ENCODE measurements at regions of chr4 and their contacts with region 1.

Region 1: GRCh38 chr4:8403173-8403753 is 37.3 kb downstream of the ACOX3 start:
- DNase-seq: peak; percentile 77
- ATAC-seq: peak; percentile 96
- H3K4me3 ChIP-seq: no peak overlapping the region
- H3K27ac ChIP-seq: no peak overlapping the region
- H3K4me1 ChIP-seq: no peaks in the 10 kb centered on the region
- H3K27me3 ChIP-seq: no peaks in the 10 kb centered on the region
- CTCF ChIP-seq: peak; percentile 99
- POLR2A ChIP-seq: peak; percentile 40; the same call in 1 of the 2 replicates
- RAD21 ChIP-seq: peak; percentile 100

Region 2: DNA sequence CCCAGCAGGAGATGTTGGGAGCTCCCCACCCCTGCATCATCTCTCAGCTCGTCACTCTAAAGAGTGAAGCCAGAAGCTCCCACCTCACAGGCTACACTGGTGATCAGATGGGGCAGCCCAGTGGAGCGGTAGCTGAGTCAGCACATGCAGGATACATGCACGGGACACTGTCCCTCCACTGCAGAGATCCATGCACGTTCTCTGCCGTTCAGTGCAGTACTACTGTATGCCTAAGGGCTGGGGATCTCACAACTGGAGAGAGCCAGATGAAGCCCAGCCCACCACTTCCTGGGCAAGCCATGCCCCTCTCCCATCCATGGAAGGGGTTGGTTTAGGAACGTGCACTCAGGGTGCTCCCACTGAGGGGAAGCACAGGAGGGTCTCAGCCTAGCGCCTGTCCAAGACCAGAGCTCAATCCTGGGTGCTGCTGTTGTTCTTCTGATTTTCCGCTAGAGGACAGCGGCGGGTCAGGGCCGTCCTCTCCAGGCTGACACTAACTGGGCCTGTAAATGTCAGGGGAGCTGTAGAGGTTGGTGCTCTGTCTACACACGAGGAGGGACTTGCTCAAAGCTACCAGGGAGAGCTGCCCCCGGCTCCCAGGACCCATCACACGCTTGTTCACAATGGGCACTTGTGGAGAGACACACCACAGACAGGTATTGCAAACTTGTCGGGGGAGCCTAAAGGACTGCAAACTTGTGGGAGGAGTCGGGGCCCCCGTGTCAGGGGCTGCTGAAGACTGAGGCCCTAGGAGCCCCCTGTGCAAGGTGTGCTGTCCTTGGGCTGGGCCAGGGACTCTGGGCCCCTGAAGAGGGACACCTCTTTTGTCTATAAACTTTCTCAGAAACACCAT is 226.5 kb before region 1 on chr4:
- CTCF ChIA-PET with region 1: interaction called, 15 read pairs
- POLR2A ChIA-PET with region 1: no interaction called
- dilution Hi-C with region 1: no loop called
- in situ Hi-C with region 1: loop called (anchors 5 kb)
- intact Hi-C with region 1: loop called (anchors 1 kb)
- DNase-seq: peak; percentile 52
- ATAC-seq: peak; percentile 99
- H3K4me3 ChIP-seq: no peak overlapping the region
- H3K27ac ChIP-seq: no peak overlapping the region
- H3K4me1 ChIP-seq: no peaks in the 10 kb centered on the region
- H3K27me3 ChIP-seq: peaks cover 38% of the 10 kb centered on the region
- CTCF ChIP-seq: peak; percentile 93
- POLR2A ChIP-seq: no peak
- RAD21 ChIP-seq: peak; percentile 94

Region 3: GRCh38 chr4:8241895-8242696 is 161.2 kb before region 1 on chr4:
- CTCF ChIA-PET with region 1: interaction called, 18 read pairs
- POLR2A ChIA-PET with region 1: no interaction called
- dilution Hi-C with region 1: no loop called
- in situ Hi-C with region 1: loop called (anchors 5 kb)
- intact Hi-C with region 1: loop called (anchors 1 kb)
- DNase-seq: peak; percentile 91
- ATAC-seq: peak; percentile 99
- H3K4me3 ChIP-seq: no peak overlapping the region
- H3K27ac ChIP-seq: no peak overlapping the region
- H3K4me1 ChIP-seq: peaks cover 5% of the 10 kb centered on the region
- H3K27me3 ChIP-seq: no peaks in the 10 kb centered on the region; the same call in 1 of the 2 replicates
- CTCF ChIP-seq: peak; percentile 97
- POLR2A ChIP-seq: no peak
- RAD21 ChIP-seq: peak; percentile 98

Region 4: GRCh38 chr4:8260656-8261111 is 142.6 kb before region 1 on chr4:
- CTCF ChIA-PET with region 1: no interaction called
- POLR2A ChIA-PET with region 1: no interaction called
- dilution Hi-C with region 1: no loop called
- in situ Hi-C with region 1: no loop called
- intact Hi-C with region 1: loop called (anchors 1 kb)
- DNase-seq: peak; percentile 96
- ATAC-seq: peak; percentile 94
- H3K4me3 ChIP-seq: no peak overlapping the region
- H3K27ac ChIP-seq: peak overlapping the region; percentile 34
- H3K4me1 ChIP-seq: peaks cover 7% of the 10 kb centered on the region
- H3K27me3 ChIP-seq: peaks cover 4% of the 10 kb centered on the region; the same call in 1 of the 2 replicates
- CTCF ChIP-seq: no peak
- POLR2A ChIP-seq: no peak
- RAD21 ChIP-seq: peak; percentile 40

Region 5: GRCh38 chr4:8267077-8267476 is 136.2 kb before region 1 on chr4:
- CTCF ChIA-PET with region 1: interaction called, 6 read pairs
- POLR2A ChIA-PET with region 1: no interaction called
- dilution Hi-C with region 1: no loop called
- in situ Hi-C with region 1: no loop called
- intact Hi-C with region 1: loop called (anchors 1 kb)
- DNase-seq: peak; percentile 33
- ATAC-seq: peak; percentile 50
- H3K4me3 ChIP-seq: no peak overlapping the region
- H3K27ac ChIP-seq: no peak overlapping the region
- H3K4me1 ChIP-seq: peaks cover 5% of the 10 kb centered on the region
- H3K27me3 ChIP-seq: peaks cover 9% of the 10 kb centered on the region
- CTCF ChIP-seq: peak; percentile 57
- POLR2A ChIP-seq: no peak
- RAD21 ChIP-seq: peak; percentile 61

Region 6: DNA sequence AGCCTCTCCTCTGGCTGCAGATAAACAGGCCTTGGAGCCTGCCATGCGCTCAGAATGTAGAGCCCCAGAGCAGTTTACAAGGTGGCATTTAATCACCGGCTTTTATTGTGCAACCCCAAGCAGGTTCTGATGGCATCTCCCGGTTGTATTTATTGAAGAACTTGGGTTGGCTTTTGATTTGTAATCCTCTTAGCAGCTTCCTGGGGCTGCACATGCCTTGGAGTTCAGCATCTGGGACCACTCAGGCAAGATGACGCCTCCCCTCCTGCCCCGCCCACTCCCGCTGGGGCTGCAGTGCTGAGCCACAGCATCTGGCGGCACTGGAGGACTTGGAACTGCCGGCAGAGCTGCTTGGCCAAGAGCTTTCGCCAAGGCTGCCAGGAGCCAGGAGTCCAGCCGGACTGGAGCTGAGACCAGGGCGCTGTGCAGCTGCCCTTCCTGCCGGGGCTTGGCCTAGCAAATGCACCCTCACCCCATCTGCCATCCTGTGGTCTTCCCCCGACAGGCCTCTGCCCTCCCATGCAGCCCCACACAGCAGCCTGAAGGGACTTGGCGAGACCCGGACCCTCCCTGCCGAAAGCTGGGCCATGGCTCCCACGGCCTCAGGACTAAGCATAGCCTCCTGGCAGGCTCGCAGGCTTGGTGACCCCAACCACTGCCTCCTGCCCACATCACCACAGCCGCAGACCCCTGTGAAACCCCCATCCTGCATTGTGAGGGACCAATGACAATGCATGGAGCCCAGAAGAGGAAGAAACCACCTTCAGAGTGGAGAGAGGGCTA is 128.3 kb before region 1 on chr4:
- CTCF ChIA-PET with region 1: interaction called, 10 read pairs
- POLR2A ChIA-PET with region 1: no interaction called
- dilution Hi-C with region 1: no loop called
- in situ Hi-C with region 1: no loop called
- intact Hi-C with region 1: loop called (anchors 1 kb)
- DNase-seq: peak; percentile 93
- ATAC-seq: peak; percentile 77
- H3K4me3 ChIP-seq: no peak overlapping the region
- H3K27ac ChIP-seq: peak overlapping the region; percentile 36
- H3K4me1 ChIP-seq: peaks cover 41% of the 10 kb centered on the region
- H3K27me3 ChIP-seq: peaks cover 9% of the 10 kb centered on the region
- CTCF ChIP-seq: peak; percentile 76
- POLR2A ChIP-seq: no peak
- RAD21 ChIP-seq: peak; percentile 90